ENCODE measurements at regions of chr11 and their contacts with region 1.

Region 1: DNA sequence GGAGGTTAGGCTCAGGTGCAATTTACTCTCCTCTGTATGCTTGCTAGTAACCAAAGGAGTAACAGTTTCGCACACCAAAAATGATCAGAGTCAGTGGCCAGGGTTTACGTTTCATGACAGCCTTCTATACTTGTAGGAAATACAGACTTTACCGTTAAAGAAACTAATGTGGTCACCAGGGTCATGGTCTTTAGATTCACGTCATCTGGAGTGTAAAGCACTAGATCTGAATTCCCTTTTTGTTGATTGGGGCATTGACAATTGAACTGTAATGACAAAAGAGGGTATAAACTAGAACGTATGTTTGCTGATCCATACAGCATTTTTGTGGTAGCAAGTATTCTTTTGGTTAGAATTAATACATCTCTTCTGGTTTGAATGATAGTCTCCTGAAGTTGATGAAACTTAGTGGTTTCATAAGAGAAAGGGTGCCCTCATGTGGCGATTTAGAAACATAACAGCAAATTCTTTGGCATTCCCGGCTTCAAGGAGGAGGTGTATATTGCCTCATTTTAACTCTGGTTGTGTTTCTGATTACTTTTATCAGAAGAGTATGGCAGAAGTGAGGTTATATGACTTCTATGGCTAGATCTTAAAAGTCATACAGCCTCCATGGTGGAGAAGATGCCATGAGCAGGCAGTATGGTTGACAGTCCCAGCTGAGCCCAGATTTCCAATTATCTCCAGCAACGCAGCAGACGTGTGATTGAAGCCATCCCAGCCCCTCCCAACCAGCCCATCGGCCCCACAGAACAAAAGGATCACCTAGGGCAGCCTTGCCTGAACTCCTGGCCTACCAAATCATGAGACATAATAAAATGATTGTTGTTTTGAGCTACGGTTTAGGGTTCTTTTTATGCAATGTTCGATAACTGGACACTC is 35.1 kb downstream of the MMP7 start:
- DNase-seq: peak; percentile 93
- H3K4me3 Mint-ChIP-seq: no peak overlapping the region
- H3K27ac Mint-ChIP-seq: no peak overlapping the region
- H3K4me1 Mint-ChIP-seq: peaks cover 17% of the 10 kb centered on the region
- H3K27me3 Mint-ChIP-seq: no peaks in the 10 kb centered on the region
- CTCF ChIP-seq: no peak

Region 2: GRCh38 chr11:102287964-102288724 is 207.3 kb before region 1 on chr11:
- CTCF ChIA-PET with region 1: interaction called, 10 read pairs
- POLR2A ChIA-PET with region 1: no interaction called
- intact Hi-C with region 1: loop called (anchors 1 kb)
- DNase-seq: peak; percentile 80
- H3K4me3 Mint-ChIP-seq: no peak overlapping the region
- H3K27ac Mint-ChIP-seq: no peak overlapping the region
- H3K4me1 Mint-ChIP-seq: peaks cover 19% of the 10 kb centered on the region
- H3K27me3 Mint-ChIP-seq: no peaks in the 10 kb centered on the region
- CTCF ChIP-seq: peak; percentile 63

Region 3: GRCh38 chr11:102346748-102347461 is 148.5 kb before region 1 on chr11 and contains the start of gene BIRC2:
- CTCF ChIA-PET with region 1: interaction called, 28 read pairs
- POLR2A ChIA-PET with region 1: no interaction called
- intact Hi-C with region 1: loop called (anchors 1 kb)
- DNase-seq: peak; percentile 92
- H3K4me3 Mint-ChIP-seq: peak within 1 kb of the TSS; percentile 79
- H3K27ac Mint-ChIP-seq: peak within 1 kb of the TSS; percentile 97
- H3K4me1 Mint-ChIP-seq: peaks cover 15% of the 10 kb centered on the region
- H3K27me3 Mint-ChIP-seq: no peaks in the 10 kb centered on the region
- CTCF ChIP-seq: peak; percentile 67
- total RNA-seq, gene BIRC2: 46.2 and 50.0 TPM in 2 replicates

Region 4: GRCh38 chr11:102367364-102367763 is 128.0 kb before region 1 on chr11:
- CTCF ChIA-PET with region 1: interaction called, 10 read pairs
- POLR2A ChIA-PET with region 1: interaction called, 3 read pairs
- intact Hi-C with region 1: no loop called
- DNase-seq: peak; percentile 10
- H3K4me3 Mint-ChIP-seq: no peak overlapping the region
- H3K27ac Mint-ChIP-seq: peak overlapping the region; percentile 32
- H3K4me1 Mint-ChIP-seq: no peaks in the 10 kb centered on the region
- H3K27me3 Mint-ChIP-seq: no peaks in the 10 kb centered on the region
- CTCF ChIP-seq: no peak

Region 5: DNA sequence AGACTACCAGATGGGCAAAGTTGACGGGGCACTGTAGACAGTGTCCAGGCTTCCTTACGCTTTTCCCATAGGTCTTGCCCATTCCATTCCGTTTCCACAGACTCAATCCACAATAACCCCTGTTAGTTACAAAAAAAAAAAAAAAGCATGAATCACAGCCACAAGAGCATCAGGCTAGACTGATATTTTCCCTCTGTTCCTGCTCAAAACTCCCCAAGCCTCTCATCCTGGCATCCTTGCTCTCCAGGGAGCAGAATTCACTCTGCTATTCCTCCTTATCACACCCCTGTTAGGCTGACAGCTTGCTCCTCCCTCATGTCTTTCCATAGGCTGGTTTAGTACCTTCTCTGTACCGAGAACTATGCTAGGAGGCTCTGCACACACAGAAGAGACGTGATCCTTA is 85.0 kb before region 1 on chr11:
- CTCF ChIA-PET with region 1: interaction called, 11 read pairs
- POLR2A ChIA-PET with region 1: no interaction called
- intact Hi-C with region 1: no loop called
- DNase-seq: no peak
- H3K4me3 Mint-ChIP-seq: no peak overlapping the region
- H3K27ac Mint-ChIP-seq: no peak overlapping the region
- H3K4me1 Mint-ChIP-seq: peaks cover 17% of the 10 kb centered on the region
- H3K27me3 Mint-ChIP-seq: no peaks in the 10 kb centered on the region
- CTCF ChIP-seq: no peak

Region 6: DNA sequence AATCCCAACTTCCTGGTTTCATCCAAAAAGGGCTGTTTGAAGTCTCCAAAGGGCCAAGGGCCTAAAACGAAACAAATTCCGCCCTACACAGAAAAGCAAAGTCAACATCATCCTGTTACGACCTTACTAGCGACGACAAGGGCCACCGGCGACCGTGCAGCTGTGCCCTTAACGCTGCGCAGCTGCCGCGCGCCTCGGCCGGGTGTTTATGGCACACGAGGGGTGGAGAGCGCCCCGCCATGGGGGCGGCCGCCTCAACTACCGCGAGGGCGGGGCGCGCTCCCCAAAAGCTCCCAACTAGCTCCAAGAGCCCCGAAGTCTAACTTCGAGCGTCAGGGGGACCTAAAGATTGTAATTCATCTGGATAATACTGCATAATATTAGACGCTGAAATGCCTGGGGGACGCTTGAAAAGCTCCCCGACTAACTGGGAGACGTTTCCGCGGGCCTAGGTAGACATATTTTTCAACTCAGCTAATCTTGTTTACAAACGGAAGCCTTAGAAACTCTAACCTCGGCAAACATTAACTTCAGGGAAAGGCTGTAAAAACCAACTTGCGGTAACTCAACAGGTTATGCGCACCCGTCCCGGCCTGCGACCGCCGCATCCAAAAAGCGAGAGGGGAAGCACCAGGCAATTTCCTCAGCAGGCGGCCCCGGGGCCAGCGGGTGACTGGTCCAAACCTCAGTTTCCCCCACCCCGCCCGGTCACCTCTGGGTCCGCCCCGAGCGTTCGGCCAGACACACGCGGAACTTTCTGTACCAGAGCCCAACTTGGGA is 43.5 kb before region 1 on chr11:
- CTCF ChIA-PET with region 1: interaction called, 9 read pairs
- POLR2A ChIA-PET with region 1: interaction called, 6 read pairs
- intact Hi-C with region 1: loop called (anchors 2 kb)
- DNase-seq: peak; percentile 62
- H3K4me3 Mint-ChIP-seq: peak overlapping the region; percentile 94
- H3K27ac Mint-ChIP-seq: peak overlapping the region; percentile 90
- H3K4me1 Mint-ChIP-seq: peaks cover 35% of the 10 kb centered on the region
- H3K27me3 Mint-ChIP-seq: no peaks in the 10 kb centered on the region
- CTCF ChIP-seq: no peak

Measured in MCF 10A (cell line).